ENCODE measurements at regions of chr7 and their contacts with region 1.

Region 1: DNA sequence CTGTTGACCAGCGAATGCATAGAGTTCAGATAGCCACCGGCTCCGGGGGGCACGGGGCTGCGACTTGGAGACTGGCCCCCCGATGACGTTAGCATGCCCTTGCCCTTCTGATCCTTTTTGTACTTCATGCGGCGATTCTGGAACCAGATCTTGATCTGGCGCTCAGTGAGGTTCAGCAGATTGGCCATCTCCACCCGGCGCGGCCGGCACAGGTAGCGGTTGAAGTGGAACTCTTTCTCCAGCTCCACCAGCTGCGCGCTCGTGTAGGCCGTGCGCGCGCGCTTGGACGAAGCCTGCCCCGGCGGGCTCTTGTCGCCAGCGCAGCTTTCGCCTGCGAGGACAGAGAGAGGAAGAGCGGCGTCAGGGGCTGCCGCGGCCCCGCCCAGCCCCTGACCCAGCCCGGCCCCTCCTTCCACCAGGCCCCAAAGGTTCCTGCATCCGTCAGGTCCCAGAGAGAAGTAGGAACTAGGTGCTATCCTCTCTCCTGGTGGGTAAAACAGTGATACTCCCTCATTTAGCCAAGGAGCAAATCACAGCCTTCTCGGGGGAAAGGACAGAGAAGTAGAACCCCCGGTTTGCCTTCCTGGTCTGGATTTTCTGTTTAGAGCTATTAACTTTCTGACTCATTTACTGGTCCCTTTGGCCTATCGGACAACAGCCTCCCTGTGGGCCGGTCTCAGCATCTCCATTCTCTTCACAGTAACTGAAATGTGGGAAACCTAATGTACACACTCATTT is 6.1 kb upstream of the HOXA2 start:
- DNase-seq: peak; percentile 63
- H3K4me3 ChIP-seq: peak overlapping the region in 3 of 4 donors; percentile 2 to 36 (median 27)
- H3K27ac ChIP-seq: peak overlapping the region; percentile 90 to 96 (median 92)
- H3K4me1 ChIP-seq: peaks cover 10 to 94% (median 54%) of the 10 kb centered on the region in 4 donors
- H3K27me3 ChIP-seq: no peaks in the 10 kb centered on the region
- CTCF ChIP-seq: peak in 2 of 5 experiments; percentile 23 to 26
- EP300 ChIP-seq: no peak
- POLR2A ChIP-seq: peak; percentile 67

Region 2: DNA sequence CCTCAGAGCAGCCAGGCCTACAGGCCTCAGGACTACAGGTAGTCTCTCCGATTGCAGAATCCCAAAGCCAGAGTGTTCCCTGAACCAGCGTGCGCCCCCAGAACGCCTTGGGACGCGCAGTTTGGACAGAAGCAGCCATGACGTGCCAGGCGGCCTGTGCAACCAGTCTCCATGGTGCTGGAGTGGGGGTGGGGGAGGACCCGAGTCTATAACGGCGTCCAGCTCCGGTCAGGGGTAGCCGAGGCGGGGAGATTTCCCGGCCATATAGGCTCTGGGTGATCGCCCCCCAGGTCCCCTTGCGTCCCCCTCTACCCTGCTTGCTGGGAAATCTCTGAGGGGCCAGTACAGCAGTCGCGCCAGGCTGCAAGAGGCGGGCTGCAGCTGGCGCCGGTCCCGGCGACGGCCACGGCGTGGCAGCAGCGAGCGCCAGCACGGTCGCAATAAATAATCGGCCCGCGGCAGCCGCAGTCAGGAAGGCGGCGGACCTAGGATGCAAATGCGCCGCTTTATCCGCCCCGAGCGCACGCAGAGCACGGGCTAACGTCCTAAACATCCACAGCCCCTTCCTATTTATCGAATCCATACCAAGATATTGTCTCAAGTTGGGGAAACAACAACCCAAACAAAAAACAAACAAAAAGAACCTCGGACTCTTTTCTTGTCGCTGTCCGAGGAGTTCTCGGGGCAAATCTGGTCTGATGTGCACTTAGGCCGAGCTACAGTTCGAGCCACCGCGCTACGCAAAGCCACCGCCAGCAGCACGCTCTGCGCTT is 42.2 kb after region 1 on chr7:
- in situ Hi-C with region 1: no loop called
- intact Hi-C with region 1: loop called (anchors 5 kb)
- DNase-seq: peak; percentile 86
- H3K4me3 ChIP-seq: peak overlapping the region; percentile 71 to 81 (median 76)
- H3K27ac ChIP-seq: peak overlapping the region; percentile 95 to 99 (median 98)
- H3K4me1 ChIP-seq: peaks cover 21 to 85% (median 64%) of the 10 kb centered on the region in 4 donors
- H3K27me3 ChIP-seq: peaks cover 58% of the 10 kb centered on the region
- CTCF ChIP-seq: peak; percentile 86 to 97 (median 93)
- EP300 ChIP-seq: no peak
- POLR2A ChIP-seq: peak; percentile 96